ENCODE measurements at regions of chr17 and their contacts with region 1.

Region 1: DNA sequence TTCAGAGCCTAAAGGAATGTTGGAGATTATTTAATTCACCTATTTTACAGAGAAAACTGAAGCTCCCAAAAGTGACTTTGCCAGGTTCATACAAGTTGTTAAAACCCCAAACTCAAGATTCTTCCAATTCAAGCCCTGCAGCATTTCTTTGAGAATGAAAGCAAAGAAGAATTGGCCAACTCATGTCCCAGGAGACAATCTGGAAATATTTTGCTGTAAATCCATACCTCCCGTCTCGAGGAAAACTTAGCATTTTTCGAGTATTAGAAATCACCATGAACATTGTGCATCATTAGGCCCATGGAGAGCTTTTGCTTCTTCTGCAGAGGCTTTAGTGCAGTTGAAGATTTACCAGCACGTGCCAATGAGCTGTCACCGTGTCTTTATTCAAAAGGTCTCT is 176.4 kb upstream of the KCNJ16 start:
- DNase-seq: no peak
- ATAC-seq: no peak
- H3K4me3 ChIP-seq: no peak overlapping the region
- H3K27ac ChIP-seq: no peak overlapping the region
- H3K4me1 ChIP-seq: peaks cover 0 to 4% of the 10 kb centered on the region in 2 experiments; a peak in 2 of 5 replicates
- H3K27me3 ChIP-seq: no peaks in the 10 kb centered on the region
- CTCF ChIP-seq: no peak
- EP300 ChIP-seq: no peak
- POLR2A ChIP-seq: no peak
- RAD21 ChIP-seq: no peak

Region 2: GRCh38 chr17:69874175-69874670 is 24.4 kb before region 1 on chr17:
- CTCF ChIA-PET with region 1: no interaction called
- POLR2A ChIA-PET with region 1: no interaction called
- in situ Hi-C with region 1: no loop called
- intact Hi-C with region 1: no loop called
- DNase-seq: peak in 1 of 4 experiments; percentile 34
- ATAC-seq: peak; percentile 57
- H3K4me3 ChIP-seq: no peak overlapping the region
- H3K27ac ChIP-seq: peak overlapping the region; percentile 43; the same call in 1 of the 3 replicates
- H3K4me1 ChIP-seq: no peaks in the 10 kb centered on the region; a peak in 2 of 5 replicates
- H3K27me3 ChIP-seq: no peaks in the 10 kb centered on the region
- CTCF ChIP-seq: no peak
- EP300 ChIP-seq: peak; percentile 25; the same call in 1 of the 2 replicates
- POLR2A ChIP-seq: no peak
- RAD21 ChIP-seq: 0 out of 4 replicates have a peak, but pooled peaks of 1 of the 2 experiments have one; percentile 22

Region 3: DNA sequence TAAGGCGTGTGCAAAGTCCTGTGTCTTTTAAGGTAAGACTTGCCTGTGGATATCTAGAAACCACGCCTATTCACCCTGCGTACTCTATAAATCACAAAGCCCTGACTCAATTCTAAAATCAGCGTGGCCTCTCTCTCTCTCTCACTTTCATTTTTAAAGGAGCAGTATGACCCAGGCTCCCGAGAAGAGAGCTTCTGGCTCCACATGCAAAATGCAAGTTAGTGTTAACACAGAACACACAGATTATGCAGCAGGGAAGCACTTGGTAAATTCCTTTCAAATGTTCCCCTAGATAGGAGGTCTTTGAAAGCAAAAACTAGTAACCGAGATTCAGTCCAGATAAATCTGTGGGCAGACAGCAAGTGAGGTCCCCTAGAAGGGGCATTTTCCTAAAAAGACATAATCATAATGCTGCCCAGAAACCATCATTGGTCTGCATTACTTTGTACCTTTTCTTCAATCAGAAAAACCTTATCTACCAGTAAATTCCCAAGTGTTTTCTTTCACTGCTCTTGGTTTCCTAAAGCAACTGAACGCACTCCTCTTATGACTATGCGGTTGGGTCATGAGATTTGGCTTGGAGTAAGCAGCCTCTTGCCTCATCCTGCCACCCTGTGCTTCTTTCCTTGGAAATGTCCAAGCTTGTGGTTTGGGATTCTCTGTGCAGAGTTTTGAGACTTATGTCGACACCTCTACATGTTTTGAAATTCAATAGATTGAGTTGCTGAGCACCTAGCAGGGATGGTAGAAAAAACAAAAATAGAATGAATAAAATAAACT is 239.0 kb after region 1 on chr17:
- CTCF ChIA-PET with region 1: no interaction called
- POLR2A ChIA-PET with region 1: no interaction called
- in situ Hi-C with region 1: no loop called
- intact Hi-C with region 1: loop called (anchors 10 kb)
- DNase-seq: no peak
- ATAC-seq: peak; percentile 66
- H3K4me3 ChIP-seq: no peak overlapping the region
- H3K27ac ChIP-seq: no peak overlapping the region
- H3K4me1 ChIP-seq: no peaks in the 10 kb centered on the region; a peak in 1 of 5 replicates
- H3K27me3 ChIP-seq: no peaks in the 10 kb centered on the region
- CTCF ChIP-seq: no peak
- EP300 ChIP-seq: no peak
- POLR2A ChIP-seq: no peak
- RAD21 ChIP-seq: no peak

Measured in K562 (cell line).